ENCODE measurements at regions of chr1 and their contacts with region 1.

Region 1: GRCh38 chr1:23567996-23568607 is 8.8 kb upstream of the ID3 start:
- DNase-seq: no peak
- ATAC-seq: peak; percentile 29
- H3K4me3 Mint-ChIP-seq: peak overlapping the region; percentile 93
- H3K27ac Mint-ChIP-seq: peak overlapping the region; percentile 92
- H3K4me1 Mint-ChIP-seq: peaks cover 61% of the 10 kb centered on the region
- H3K27me3 Mint-ChIP-seq: no peaks in the 10 kb centered on the region
- CTCF ChIP-seq: no peak

Region 2: GRCh38 chr1:23619299-23620188 is 51.4 kb after region 1 on chr1:
- CTCF ChIA-PET with region 1: no interaction called
- POLR2A ChIA-PET with region 1: interaction called, 108 read pairs
- intact Hi-C with region 1: no loop called
- DNase-seq: peak; percentile 75
- ATAC-seq: peak; percentile 81
- H3K4me3 Mint-ChIP-seq: peak overlapping the region; percentile 81
- H3K27ac Mint-ChIP-seq: peak overlapping the region; percentile 91
- H3K4me1 Mint-ChIP-seq: peaks cover 92% of the 10 kb centered on the region
- H3K27me3 Mint-ChIP-seq: no peaks in the 10 kb centered on the region
- CTCF ChIP-seq: no peak